ENCODE measurements at regions of chr12 and their contacts with region 1.

Region 1: DNA sequence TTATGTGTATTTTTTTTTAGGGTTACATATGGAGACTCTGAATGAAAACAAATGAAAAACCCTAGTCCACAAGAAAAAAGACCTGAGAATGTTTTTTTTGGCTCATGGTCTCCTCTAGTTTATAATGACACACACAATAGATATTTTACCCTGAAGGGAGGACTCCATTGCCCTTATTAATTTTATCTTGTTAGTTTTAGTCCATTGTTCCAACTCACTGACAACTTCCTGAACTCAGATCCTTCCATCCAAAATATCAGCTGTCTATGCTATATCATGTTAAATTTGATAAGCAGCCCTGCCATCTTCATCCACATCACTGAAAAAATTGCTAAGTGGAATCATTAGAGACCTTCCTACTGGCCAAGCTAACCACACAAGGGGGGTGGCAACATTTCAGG is 232.1 kb downstream of the MON2 start:
- DNase-seq: no peak
- H3K4me3 Mint-ChIP-seq: no peak overlapping the region
- H3K27ac Mint-ChIP-seq: no peak overlapping the region
- H3K4me1 Mint-ChIP-seq: peaks cover 20% of the 10 kb centered on the region
- H3K27me3 Mint-ChIP-seq: peaks cover 3% of the 10 kb centered on the region

Region 2: GRCh38 chr12:62466594-62467491 is 231.9 kb before region 1 on chr12 and contains the start of gene MON2:
- intact Hi-C with region 1: no loop called
- DNase-seq: peak; percentile 97
- H3K4me3 Mint-ChIP-seq: peak within 1 kb of the TSS; percentile 86
- H3K27ac Mint-ChIP-seq: peak within 1 kb of the TSS; percentile 93
- H3K4me1 Mint-ChIP-seq: peaks cover 19% of the 10 kb centered on the region
- H3K27me3 Mint-ChIP-seq: peaks cover 8% of the 10 kb centered on the region
- total RNA-seq, gene MON2: 32.8 and 36.4 TPM in 2 replicates

Region 3: GRCh38 chr12:62758216-62758615 is 59.5 kb after region 1 on chr12:
- intact Hi-C with region 1: loop called (anchors 5 kb)
- DNase-seq: no peak
- H3K4me3 Mint-ChIP-seq: no peak overlapping the region
- H3K27ac Mint-ChIP-seq: no peak overlapping the region
- H3K4me1 Mint-ChIP-seq: peaks cover 22% of the 10 kb centered on the region
- H3K27me3 Mint-ChIP-seq: peaks cover 12% of the 10 kb centered on the region

Region 4: DNA sequence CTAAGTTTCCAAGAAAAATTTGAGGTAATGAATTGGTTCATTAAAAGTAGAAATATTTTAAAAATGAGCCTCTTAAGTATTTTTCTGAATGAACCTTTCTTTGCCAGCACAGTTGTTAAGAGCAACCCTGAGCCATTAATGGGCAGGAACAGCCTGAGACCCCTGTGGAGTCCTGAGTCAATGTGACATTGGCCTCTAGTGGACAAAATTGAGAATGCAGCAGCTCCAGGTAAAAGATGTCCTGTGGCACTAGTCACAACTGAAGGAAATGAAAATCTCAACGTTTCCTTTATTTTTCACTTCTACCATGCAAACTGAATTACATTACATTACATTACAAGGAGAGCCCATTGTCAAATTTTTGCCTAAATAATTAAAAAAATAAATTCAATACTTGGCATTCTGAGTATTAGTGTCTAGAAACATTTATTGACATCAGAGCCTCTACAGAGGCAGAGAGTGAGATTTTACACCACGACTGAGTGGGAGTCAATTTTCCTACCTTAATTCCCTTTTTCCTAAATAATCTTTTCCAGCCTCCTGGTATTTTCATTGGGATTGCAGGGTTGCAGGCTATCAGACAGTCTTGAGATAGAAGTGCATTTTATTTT is 100.5 kb after region 1 on chr12:
- intact Hi-C with region 1: no loop called
- DNase-seq: peak; percentile 87
- H3K4me3 Mint-ChIP-seq: no peak overlapping the region
- H3K27ac Mint-ChIP-seq: no peak overlapping the region
- H3K4me1 Mint-ChIP-seq: no peaks in the 10 kb centered on the region
- H3K27me3 Mint-ChIP-seq: peaks cover 10% of the 10 kb centered on the region

Region 5: GRCh38 chr12:63045020-63045860 is 346.5 kb after region 1 on chr12:
- intact Hi-C with region 1: no loop called
- DNase-seq: no peak
- H3K4me3 Mint-ChIP-seq: no peak overlapping the region
- H3K27ac Mint-ChIP-seq: no peak overlapping the region
- H3K4me1 Mint-ChIP-seq: no peaks in the 10 kb centered on the region
- H3K27me3 Mint-ChIP-seq: no peaks in the 10 kb centered on the region